Stomach (tissue), 19 donors: ENCODE measurements at regions of chr14 and their contacts with region 1.

Region 1: GRCh38 chr14:21287168-21287567 is 7.3 kb downstream of the RPGRIP1 start:
- DNase-seq: no peak
- H3K4me3 ChIP-seq: no peak overlapping the region
- H3K27ac ChIP-seq: no peak overlapping the region
- H3K4me1 ChIP-seq: no peaks in the 10 kb centered on the region
- H3K27me3 ChIP-seq: no peaks in the 10 kb centered on the region
- CTCF ChIP-seq: no peak
- EP300 ChIP-seq: no peak
- POLR2A ChIP-seq: no peak

Region 2: GRCh38 chr14:21334202-21334899 is 47.2 kb after region 1 on chr14:
- intact Hi-C with region 1: loop called (anchors 10 kb)
- DNase-seq: no peak
- H3K4me3 ChIP-seq: no peak overlapping the region
- H3K27ac ChIP-seq: no peak overlapping the region
- H3K4me1 ChIP-seq: no peaks in the 10 kb centered on the region
- H3K27me3 ChIP-seq: no peaks in the 10 kb centered on the region
- CTCF ChIP-seq: no peak
- EP300 ChIP-seq: no peak
- POLR2A ChIP-seq: no peak